Activated CD4-positive, alpha-beta T cell treated with anti-CD3 and anti-CD28 coated beads for 36 hours (primary cell): ENCODE measurements at regions of chrX and their contacts with region 1.

Region 1: GRCh38 chrX:11533211-11533651 is 132.5 kb downstream of the ARHGAP6 start:
- DNase-seq: no peak
- ATAC-seq: peak; percentile 95
- H3K4me3 Mint-ChIP-seq: no peak overlapping the region
- H3K27ac Mint-ChIP-seq: no peak overlapping the region
- H3K4me1 Mint-ChIP-seq: no peaks in the 10 kb centered on the region
- H3K27me3 Mint-ChIP-seq: no peaks in the 10 kb centered on the region

Region 2: DNA sequence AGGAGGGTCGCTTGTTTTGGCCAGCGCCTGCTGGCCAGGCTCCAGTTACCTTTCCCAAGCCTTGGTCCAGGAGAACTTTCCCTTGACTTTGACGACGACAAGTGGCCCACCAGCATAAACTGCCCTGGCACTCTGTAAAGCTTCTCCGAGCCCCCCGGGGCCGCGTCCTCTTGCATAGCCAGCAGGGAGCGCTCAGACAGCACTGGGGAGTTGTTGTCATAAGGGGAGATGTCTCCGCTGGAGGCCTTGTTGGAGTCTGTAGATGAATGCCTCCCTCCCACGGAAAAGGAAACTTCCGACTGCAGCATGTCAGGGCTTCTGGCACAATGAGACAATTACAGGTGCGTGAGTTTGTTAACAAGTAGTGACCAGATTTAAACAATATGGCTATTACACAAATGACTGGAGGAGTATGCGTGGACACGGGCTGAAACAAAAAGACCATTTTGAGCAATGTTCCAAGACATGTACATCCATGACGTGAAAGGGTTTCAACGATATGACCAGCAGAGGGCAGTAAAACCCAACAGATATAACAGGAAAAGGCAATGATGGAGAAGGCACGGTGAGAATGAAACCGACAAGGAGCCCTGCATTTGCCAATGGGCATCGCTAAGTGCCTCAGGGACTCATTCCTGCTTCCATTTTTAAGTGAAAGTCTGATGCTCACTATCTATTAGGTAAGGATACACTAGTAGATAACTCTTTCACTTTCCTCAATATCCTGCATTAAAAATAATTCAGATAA is 389.1 kb before region 1 on chrX:
- CTCF ChIA-PET with region 1: interaction called, 3 read pairs
- POLR2A ChIA-PET with region 1: no interaction called
- intact Hi-C with region 1: loop called (anchors 1 to 2 kb)
- DNase-seq: peak; percentile 57
- ATAC-seq: peak; percentile 75
- H3K4me3 Mint-ChIP-seq: no peak overlapping the region
- H3K27ac Mint-ChIP-seq: no peak overlapping the region
- H3K4me1 Mint-ChIP-seq: peaks cover 2% of the 10 kb centered on the region
- H3K27me3 Mint-ChIP-seq: peaks cover 2% of the 10 kb centered on the region

Region 3: DNA sequence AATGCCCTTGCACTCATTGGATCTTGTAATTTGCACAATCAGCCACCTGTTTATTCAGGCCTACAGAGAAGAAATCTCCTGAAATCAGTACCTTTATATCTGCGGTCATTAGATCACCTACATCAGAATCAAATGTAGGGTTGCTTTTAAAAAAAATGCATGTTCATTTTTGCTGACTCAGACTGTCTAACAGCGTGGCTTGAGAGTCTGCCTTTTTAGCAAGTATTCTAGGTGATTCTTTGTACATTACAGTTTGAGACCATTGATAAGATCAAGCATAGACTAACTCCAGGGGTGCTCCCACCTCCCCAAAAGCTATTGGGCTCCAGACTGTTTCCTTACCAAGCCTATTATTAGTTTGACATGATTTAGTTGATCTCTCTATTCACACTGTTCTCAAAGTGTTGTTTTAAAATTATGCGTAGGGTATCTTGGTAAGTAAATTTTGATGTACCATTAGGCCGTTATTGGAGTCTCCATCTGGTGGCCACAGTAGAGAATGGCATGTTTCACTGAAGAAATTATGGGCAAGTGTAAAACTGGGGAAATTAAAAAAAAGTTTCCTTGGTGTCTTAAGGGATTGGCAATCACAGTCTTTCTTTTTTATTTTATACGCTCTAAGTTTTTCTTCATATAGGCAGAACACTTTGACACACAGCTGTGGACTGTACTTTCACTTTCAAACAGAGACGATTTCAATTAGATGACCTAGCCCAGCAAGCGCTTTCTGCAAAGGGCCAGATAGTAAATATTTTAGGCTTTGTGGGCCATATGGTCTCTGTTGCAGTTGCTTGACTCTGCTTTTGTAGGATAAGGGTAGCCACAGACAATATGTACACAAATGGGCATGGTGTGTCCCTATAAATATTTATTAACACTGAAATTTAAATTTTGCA is 191.1 kb after region 1 on chrX:
- CTCF ChIA-PET with region 1: interaction called, 3 read pairs
- POLR2A ChIA-PET with region 1: no interaction called
- intact Hi-C with region 1: loop called (anchors 1 to 5 kb)
- DNase-seq: peak; percentile 18
- ATAC-seq: no peak
- H3K4me3 Mint-ChIP-seq: no peak overlapping the region
- H3K27ac Mint-ChIP-seq: no peak overlapping the region
- H3K4me1 Mint-ChIP-seq: no peaks in the 10 kb centered on the region
- H3K27me3 Mint-ChIP-seq: no peaks in the 10 kb centered on the region

Region 4: GRCh38 chrX:11770320-11770719 is 237.1 kb after region 1 on chrX:
- CTCF ChIA-PET with region 1: interaction called, 12 read pairs
- POLR2A ChIA-PET with region 1: no interaction called
- intact Hi-C with region 1: loop called (anchors 1 kb)
- DNase-seq: peak; percentile 61
- ATAC-seq: peak; percentile 75
- H3K4me3 Mint-ChIP-seq: no peak overlapping the region
- H3K27ac Mint-ChIP-seq: peak overlapping the region; percentile 93
- H3K4me1 Mint-ChIP-seq: peaks cover 37% of the 10 kb centered on the region
- H3K27me3 Mint-ChIP-seq: no peaks in the 10 kb centered on the region

Region 5: GRCh38 chrX:11934089-11934488 is 400.9 kb after region 1 on chrX:
- CTCF ChIA-PET with region 1: no interaction called
- POLR2A ChIA-PET with region 1: no interaction called
- intact Hi-C with region 1: no loop called
- DNase-seq: no peak
- ATAC-seq: no peak
- H3K4me3 Mint-ChIP-seq: no peak overlapping the region
- H3K27ac Mint-ChIP-seq: no peak overlapping the region
- H3K4me1 Mint-ChIP-seq: no peaks in the 10 kb centered on the region
- H3K27me3 Mint-ChIP-seq: no peaks in the 10 kb centered on the region

Region 6: DNA sequence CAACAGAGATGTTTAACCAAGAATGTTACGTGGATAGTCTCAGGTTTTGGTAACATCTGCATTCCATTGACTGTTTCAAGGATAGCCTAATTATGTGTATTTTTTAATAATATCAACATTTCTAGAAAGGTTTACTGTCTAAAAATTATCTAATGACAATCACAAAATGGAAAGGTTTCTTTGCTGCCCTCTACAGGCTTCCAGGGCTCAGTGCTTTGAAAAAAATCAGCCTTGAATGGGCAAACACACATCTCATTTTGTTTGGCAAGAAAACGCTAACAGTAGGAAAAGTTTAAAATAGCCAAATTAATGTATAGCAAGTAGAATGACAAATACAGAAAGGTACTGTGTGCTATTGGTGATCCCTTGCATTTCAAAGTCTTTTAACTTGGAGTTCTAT is 1034.6 kb after region 1 on chrX:
- CTCF ChIA-PET with region 1: no interaction called
- POLR2A ChIA-PET with region 1: no interaction called
- intact Hi-C with region 1: loop called in 1 of 2 experiments (anchors 5 kb)
- DNase-seq: no peak
- ATAC-seq: no peak
- H3K4me3 Mint-ChIP-seq: no peak overlapping the region
- H3K27ac Mint-ChIP-seq: no peak overlapping the region
- H3K4me1 Mint-ChIP-seq: no peaks in the 10 kb centered on the region
- H3K27me3 Mint-ChIP-seq: no peaks in the 10 kb centered on the region

Region 7: GRCh38 chrX:12771445-12772069 is 1238.3 kb after region 1 on chrX:
- CTCF ChIA-PET with region 1: no interaction called
- POLR2A ChIA-PET with region 1: no interaction called
- intact Hi-C with region 1: loop called in 1 of 2 experiments (anchors 2 kb)
- DNase-seq: peak; percentile 85
- ATAC-seq: peak; percentile 100
- H3K4me3 Mint-ChIP-seq: no peak overlapping the region
- H3K27ac Mint-ChIP-seq: no peak overlapping the region
- H3K4me1 Mint-ChIP-seq: peaks cover 8% of the 10 kb centered on the region
- H3K27me3 Mint-ChIP-seq: peaks cover 5% of the 10 kb centered on the region